ENCODE measurements at regions of chr3 and their contacts with region 1.

Region 1: DNA sequence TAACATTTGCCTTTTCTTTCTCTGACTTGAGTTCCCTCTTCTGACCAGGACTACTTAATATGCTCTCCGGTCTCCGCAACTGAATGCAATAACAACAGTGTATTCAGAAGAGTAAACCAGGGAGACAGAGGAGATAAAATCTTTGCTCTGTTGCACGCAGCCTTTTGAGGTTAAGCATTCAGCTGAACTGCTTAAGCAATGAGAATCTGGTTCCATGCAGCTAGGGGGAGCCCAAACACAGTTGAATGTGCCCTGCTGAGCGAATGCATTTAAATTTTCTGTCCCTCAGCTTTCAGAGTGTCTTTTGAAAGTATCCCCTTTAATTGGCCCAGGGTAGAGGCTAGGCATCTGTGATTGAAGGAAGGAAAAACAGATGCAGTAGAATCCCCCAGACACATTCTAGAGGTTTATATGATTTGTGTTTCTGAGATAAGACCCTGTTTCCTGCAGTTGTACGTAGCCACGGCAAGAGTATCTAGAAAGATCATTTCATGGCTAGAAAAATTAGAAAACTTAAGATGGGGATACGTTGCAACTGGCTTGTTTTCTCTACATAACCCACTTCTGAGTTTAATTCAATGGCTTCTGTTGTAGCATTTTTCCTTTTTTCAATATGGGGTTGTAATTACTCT is 309.6 kb downstream of the TUSC7 start:
- DNase-seq: peak; percentile 75
- H3K4me3 ChIP-seq: no peak overlapping the region
- H3K27ac ChIP-seq: no peak overlapping the region
- H3K4me1 ChIP-seq: no peaks in the 10 kb centered on the region
- H3K27me3 ChIP-seq: no peaks in the 10 kb centered on the region
- CTCF ChIP-seq: peak; percentile 51 to 85 (median 71)
- EP300 ChIP-seq: no peak
- POLR2A ChIP-seq: no peak

Region 2: DNA sequence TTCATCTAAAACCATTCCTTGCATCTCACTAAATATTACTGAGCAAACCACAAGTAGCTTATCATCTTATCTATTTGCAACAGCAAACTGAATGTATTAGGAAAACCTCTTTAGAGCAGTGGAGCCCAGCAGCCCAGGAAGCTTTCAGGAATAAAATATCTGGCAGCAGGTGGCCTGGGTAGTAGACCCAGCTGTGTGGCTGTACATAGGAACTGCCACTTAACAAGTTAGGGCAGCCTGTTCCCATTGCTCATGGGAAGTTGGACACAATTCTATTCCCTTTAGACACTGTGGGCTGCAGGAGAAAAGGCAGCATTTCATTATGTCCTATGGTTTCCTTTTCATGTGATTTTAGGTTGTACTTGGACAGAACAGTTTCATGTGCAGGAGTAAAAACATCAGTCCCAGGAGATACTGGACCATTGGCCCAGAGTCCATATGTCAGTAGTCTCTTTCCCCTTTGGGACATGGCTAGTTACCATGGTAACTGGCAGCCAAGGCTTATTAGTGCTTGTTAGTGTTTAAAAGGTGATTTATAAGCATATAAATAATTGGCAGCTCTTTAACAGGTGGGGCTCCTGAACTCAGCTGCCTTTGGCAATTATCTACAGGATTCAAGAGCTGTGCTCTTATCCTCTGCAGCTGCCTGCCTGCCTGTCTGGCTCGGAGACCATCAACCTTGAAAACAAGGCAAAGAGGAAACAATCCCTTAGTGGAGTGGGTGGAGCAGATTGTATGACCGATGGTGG is 545.0 kb before region 1 on chr3:
- intact Hi-C with region 1: no loop called
- DNase-seq: no peak
- H3K4me3 ChIP-seq: no peak overlapping the region
- H3K27ac ChIP-seq: no peak overlapping the region
- H3K4me1 ChIP-seq: no peaks in the 10 kb centered on the region
- H3K27me3 ChIP-seq: no peaks in the 10 kb centered on the region
- CTCF ChIP-seq: no peak
- EP300 ChIP-seq: no peak
- POLR2A ChIP-seq: no peak

Region 3: DNA sequence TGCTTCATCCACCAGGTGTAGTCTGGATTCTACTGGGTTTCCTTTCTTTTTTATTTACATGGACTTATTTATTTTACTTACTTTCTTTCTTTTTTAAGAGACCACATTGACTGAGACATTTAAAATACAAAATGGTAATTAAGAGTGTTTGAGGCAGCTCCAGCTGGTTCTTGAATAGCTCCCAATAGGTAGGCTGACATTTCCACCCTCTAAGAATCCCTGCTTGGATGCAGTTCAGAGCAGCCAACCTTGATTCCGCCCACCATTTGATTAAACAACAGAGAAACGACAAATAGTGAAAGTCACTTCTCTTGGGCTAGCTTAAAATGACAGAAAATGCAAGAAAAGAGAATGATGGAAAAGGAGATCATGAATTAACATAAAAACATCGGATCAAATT is 39.1 kb before region 1 on chr3:
- intact Hi-C with region 1: no loop called
- DNase-seq: no peak
- H3K4me3 ChIP-seq: no peak overlapping the region
- H3K27ac ChIP-seq: no peak overlapping the region
- H3K4me1 ChIP-seq: no peaks in the 10 kb centered on the region
- H3K27me3 ChIP-seq: no peaks in the 10 kb centered on the region
- CTCF ChIP-seq: no peak
- EP300 ChIP-seq: no peak
- POLR2A ChIP-seq: no peak

Region 4: DNA sequence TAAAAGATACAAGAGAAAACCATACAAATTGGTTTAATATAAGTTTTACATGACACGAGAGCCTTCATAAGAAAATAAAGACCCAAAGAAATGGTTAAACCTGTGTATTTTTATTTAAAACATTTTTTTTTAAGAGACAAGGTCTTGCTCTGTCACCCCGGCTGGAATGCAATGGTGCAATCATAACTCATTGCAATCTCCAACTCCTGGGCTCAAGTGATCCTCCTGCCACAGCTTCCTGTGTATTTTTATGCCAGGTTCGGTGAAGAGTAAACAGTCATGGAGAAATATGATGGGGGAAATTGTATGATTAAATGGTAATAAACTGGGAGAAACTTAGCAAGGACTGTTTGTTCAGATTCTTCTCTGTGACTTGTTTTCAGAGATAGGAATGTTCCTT is 131.4 kb after region 1 on chr3:
- intact Hi-C with region 1: no loop called
- DNase-seq: no peak
- H3K4me3 ChIP-seq: no peak overlapping the region
- H3K27ac ChIP-seq: no peak overlapping the region
- H3K4me1 ChIP-seq: no peaks in the 10 kb centered on the region
- H3K27me3 ChIP-seq: no peaks in the 10 kb centered on the region
- CTCF ChIP-seq: no peak
- EP300 ChIP-seq: no peak
- POLR2A ChIP-seq: no peak

Region 5: GRCh38 chr3:117719316-117719926 is 700.2 kb after region 1 on chr3:
- intact Hi-C with region 1: loop called (anchors 1 kb)
- DNase-seq: no peak
- H3K4me3 ChIP-seq: no peak overlapping the region
- H3K27ac ChIP-seq: no peak overlapping the region
- H3K4me1 ChIP-seq: no peaks in the 10 kb centered on the region
- H3K27me3 ChIP-seq: no peaks in the 10 kb centered on the region
- CTCF ChIP-seq: peak; percentile 28 to 78 (median 60)
- EP300 ChIP-seq: no peak
- POLR2A ChIP-seq: no peak

Region 6: GRCh38 chr3:117997201-117998049 is 978.2 kb after region 1 on chr3:
- intact Hi-C with region 1: loop called (anchors 2 kb)
- DNase-seq: peak; percentile 90
- H3K4me3 ChIP-seq: peak overlapping the region; percentile 41 to 67 (median 58)
- H3K27ac ChIP-seq: peak overlapping the region in 3 of 4 donors; percentile 58 to 75 (median 63)
- H3K4me1 ChIP-seq: peaks cover 0 to 9% (median 4%) of the 10 kb centered on the region in 4 donors
- H3K27me3 ChIP-seq: peaks cover 0 to 6% (median 0%) of the 10 kb centered on the region in 3 donors
- CTCF ChIP-seq: peak; percentile 58 to 87 (median 68)
- EP300 ChIP-seq: no peak
- POLR2A ChIP-seq: no peak